H1 (cell line): ENCODE measurements at regions of chr2 and their contacts with region 1.

Region 1: DNA sequence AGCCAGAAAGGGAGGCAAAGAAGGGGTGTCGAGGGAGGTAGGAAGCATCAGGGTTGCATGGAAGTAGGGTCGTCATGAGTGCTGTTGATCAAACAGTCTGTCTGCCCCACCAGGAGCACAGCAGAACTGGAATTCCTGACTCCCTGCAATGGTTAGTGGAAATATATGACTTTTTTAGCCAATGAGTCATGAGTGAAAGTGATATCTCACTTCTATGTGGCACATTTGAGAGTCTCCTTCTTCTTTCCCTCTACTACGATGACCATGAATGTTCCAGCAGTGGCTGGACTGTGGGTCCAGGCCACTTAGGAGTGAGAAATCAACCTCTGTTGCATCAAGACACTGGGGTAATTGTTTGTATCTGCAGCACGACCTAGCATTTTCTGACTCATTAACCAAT is 199.5 kb downstream of the TTC32 start:
- DNase-seq: no peak
- H3K4me3 ChIP-seq: no peak overlapping the region
- H3K27ac ChIP-seq: no peak overlapping the region
- H3K4me1 ChIP-seq: no peaks in the 10 kb centered on the region
- H3K27me3 ChIP-seq: no peaks in the 10 kb centered on the region
- CTCF ChIP-seq: no peak
- EP300 ChIP-seq: no peak
- POLR2A ChIP-seq: no peak
- RAD21 ChIP-seq: no peak

Region 2: DNA sequence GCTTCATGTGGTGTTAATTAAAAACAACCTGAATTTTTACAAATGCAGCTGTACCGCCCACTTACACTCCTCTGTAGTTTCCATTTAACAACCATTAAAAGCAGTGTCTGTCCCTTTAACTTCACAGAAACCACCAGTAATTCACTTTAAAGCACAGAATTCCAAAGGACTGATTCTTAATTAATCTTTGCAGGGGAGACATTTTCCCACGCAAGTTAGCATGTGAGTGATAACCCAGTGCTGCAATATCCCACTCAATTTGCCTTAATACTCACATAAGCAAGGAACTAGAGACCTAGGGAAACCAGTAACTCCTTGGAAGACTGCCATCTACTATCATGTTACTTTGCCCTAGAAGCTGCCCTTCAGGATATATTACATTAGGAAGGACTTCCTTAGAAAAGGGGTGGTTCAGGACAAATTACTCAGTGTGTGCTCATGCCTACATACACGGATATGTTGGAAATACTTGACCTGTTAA is 446.1 kb before region 1 on chr2:
- CTCF ChIA-PET with region 1: no interaction called
- POLR2A ChIA-PET with region 1: no interaction called
- DNase-seq: no peak
- H3K4me3 ChIP-seq: no peak overlapping the region
- H3K27ac ChIP-seq: no peak overlapping the region
- H3K4me1 ChIP-seq: no peaks in the 10 kb centered on the region
- H3K27me3 ChIP-seq: no peaks in the 10 kb centered on the region
- CTCF ChIP-seq: no peak
- EP300 ChIP-seq: no peak
- POLR2A ChIP-seq: no peak
- RAD21 ChIP-seq: no peak

Region 3: DNA sequence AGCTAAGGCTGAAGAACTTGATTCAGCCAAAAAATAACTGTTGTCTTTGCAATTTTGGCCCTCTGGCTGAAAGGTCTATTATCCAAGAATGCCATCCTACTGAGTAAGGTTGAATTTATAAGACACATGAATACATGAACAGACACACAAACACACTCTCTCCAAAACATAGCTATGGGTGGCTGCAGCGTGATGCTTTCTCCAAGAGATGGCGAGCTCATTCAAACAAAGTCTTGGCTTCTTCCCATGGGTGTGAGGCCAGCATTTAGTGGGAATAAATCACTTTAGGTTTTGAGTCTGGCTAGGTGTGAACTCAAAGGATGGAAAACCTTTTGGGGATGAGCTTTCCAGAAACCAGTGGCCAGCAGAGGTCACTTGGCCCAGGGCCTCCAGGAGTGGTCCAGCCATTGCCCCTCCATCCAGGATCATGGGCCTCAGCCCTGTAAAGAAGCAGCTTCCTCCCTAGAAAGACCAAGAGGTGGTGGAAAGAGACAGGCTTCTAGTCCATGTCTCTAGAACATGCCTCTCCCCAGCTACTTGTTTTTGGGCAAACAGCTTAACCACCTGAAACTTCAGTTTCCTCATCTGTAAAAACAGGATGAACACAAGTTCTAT is 332.8 kb before region 1 on chr2:
- CTCF ChIA-PET with region 1: interaction called, 10 read pairs
- POLR2A ChIA-PET with region 1: no interaction called
- DNase-seq: no peak
- H3K4me3 ChIP-seq: no peak overlapping the region
- H3K27ac ChIP-seq: no peak overlapping the region
- H3K4me1 ChIP-seq: no peaks in the 10 kb centered on the region
- H3K27me3 ChIP-seq: peaks cover 2 to 17% (median 8%) of the 10 kb centered on the region in 4 experiments
- CTCF ChIP-seq: peak; percentile 17 to 74 (median 51)
- EP300 ChIP-seq: no peak
- POLR2A ChIP-seq: no peak
- RAD21 ChIP-seq: peak; percentile 76 to 83

Region 4: DNA sequence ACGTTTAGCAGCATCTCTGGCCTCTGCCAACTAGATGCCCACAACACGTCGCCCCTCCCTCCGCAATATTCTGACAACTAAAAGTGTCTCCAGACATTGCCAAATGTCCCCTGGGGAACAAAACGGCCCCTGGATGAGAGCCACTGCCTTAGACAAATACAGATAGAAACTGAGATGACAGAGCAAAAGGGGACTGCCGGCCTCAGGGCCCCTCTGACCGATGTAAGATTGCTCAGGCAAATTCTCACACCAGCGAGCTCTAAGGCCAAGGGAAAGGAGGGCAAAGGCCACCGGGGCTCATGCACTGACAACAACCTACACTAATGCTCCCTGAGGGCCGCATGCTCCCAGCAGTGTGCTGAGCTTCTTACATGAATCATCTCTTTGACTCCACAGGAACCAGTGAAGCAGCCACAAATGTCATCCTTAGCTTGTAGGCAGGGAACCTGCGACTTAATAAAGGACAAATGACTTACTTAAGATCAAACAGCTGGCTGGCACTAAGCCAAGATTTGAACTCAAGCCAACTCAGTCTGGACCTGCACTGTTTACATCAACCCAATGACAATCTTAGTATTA is 29.0 kb before region 1 on chr2:
- CTCF ChIA-PET with region 1: interaction called, 12 read pairs
- POLR2A ChIA-PET with region 1: no interaction called
- DNase-seq: no peak
- H3K4me3 ChIP-seq: no peak overlapping the region
- H3K27ac ChIP-seq: no peak overlapping the region
- H3K4me1 ChIP-seq: no peaks in the 10 kb centered on the region
- H3K27me3 ChIP-seq: no peaks in the 10 kb centered on the region
- CTCF ChIP-seq: no peak
- EP300 ChIP-seq: no peak
- POLR2A ChIP-seq: no peak
- RAD21 ChIP-seq: no peak

Region 5: GRCh38 chr2:19685731-19686130 is 16.5 kb before region 1 on chr2:
- CTCF ChIA-PET with region 1: interaction called, 12 read pairs
- POLR2A ChIA-PET with region 1: no interaction called
- DNase-seq: no peak
- H3K4me3 ChIP-seq: no peak overlapping the region
- H3K27ac ChIP-seq: no peak overlapping the region
- H3K4me1 ChIP-seq: no peaks in the 10 kb centered on the region
- H3K27me3 ChIP-seq: no peaks in the 10 kb centered on the region
- CTCF ChIP-seq: no peak
- EP300 ChIP-seq: no peak
- POLR2A ChIP-seq: no peak
- RAD21 ChIP-seq: no peak

Region 6: GRCh38 chr2:19714926-19715325 is 12.7 kb after region 1 on chr2:
- CTCF ChIA-PET with region 1: interaction called, 13 read pairs
- POLR2A ChIA-PET with region 1: no interaction called
- DNase-seq: no peak
- H3K4me3 ChIP-seq: no peak overlapping the region
- H3K27ac ChIP-seq: no peak overlapping the region
- H3K4me1 ChIP-seq: no peaks in the 10 kb centered on the region
- H3K27me3 ChIP-seq: no peaks in the 10 kb centered on the region; a peak in 1 of 7 replicates
- CTCF ChIP-seq: no peak
- EP300 ChIP-seq: no peak
- POLR2A ChIP-seq: no peak
- RAD21 ChIP-seq: no peak

Region 7: GRCh38 chr2:19738707-19739106 is 36.4 kb after region 1 on chr2:
- CTCF ChIA-PET with region 1: interaction called, 13 read pairs
- POLR2A ChIA-PET with region 1: no interaction called
- DNase-seq: no peak
- H3K4me3 ChIP-seq: no peak overlapping the region
- H3K27ac ChIP-seq: no peak overlapping the region
- H3K4me1 ChIP-seq: no peaks in the 10 kb centered on the region
- H3K27me3 ChIP-seq: no peaks in the 10 kb centered on the region
- CTCF ChIP-seq: no peak
- EP300 ChIP-seq: no peak
- POLR2A ChIP-seq: no peak
- RAD21 ChIP-seq: no peak